HepG2 (cell line): ENCODE measurements at regions of chr1 and their contacts with region 1.

Region 1: GRCh38 chr1:67535474-67535873 is 105.3 kb upstream of the SERBP1 start:
- DNase-seq: peak; percentile 80
- ATAC-seq: peak; percentile 68
- H3K4me3 ChIP-seq: peak overlapping the region in 1 of 3 experiments; percentile 19; a peak in 1 of 6 replicates
- H3K27ac ChIP-seq: peak overlapping the region; percentile 82
- H3K4me1 ChIP-seq: peaks cover 61% of the 10 kb centered on the region
- H3K27me3 ChIP-seq: no peaks in the 10 kb centered on the region
- CTCF ChIP-seq: peak; percentile 93
- EP300 ChIP-seq: peak in 1 of 2 experiments; percentile 51; a peak in 2 of 4 replicates
- POLR2A ChIP-seq: no peak
- RAD21 ChIP-seq: peak; percentile 90

Region 2: DNA sequence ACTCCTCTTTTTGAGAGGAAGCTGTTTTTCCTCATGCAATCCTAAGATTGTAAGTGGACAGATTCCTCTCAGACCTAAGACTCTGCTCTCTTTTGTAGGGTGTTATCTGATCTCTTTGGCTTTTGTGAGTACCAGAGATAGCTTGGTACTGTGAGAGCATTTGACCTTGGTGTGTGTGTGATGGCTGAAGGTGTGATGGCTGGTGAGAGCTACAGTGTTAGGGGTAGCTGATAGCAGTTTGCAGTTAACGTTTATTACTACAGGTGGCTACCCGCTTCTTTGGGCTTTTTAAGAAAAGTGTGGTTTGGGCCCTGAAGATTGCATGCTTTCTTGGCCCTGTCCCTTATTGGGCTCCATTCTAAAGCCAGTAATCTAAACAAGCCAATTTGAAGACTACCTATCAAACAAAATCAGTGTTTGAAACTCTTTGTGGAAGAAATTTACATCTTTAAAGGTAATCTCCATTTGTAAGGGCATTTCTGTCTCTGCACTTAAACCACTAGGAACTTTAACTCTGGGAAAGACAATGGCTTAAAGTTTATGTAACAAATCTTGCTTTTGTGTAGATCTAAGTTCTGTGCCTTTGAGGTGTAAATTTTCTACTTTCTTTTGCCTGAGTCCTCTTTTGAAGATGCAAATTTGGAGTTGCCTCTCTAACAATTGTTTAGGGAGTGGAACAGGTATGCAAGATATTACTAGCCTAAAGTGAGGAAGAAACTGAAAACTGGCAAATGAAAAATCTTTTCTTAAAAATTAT is 20.0 kb before region 1 on chr1:
- CTCF ChIA-PET with region 1: interaction called, 3 read pairs
- POLR2A ChIA-PET with region 1: interaction called, 12 read pairs
- in situ Hi-C with region 1: no loop called
- intact Hi-C with region 1: loop called (anchors 1 kb)
- DNase-seq: no peak
- ATAC-seq: no peak
- H3K4me3 ChIP-seq: no peak overlapping the region
- H3K27ac ChIP-seq: peak overlapping the region; percentile 75
- H3K4me1 ChIP-seq: peaks cover 40% of the 10 kb centered on the region
- H3K27me3 ChIP-seq: no peaks in the 10 kb centered on the region
- CTCF ChIP-seq: no peak
- EP300 ChIP-seq: no peak
- POLR2A ChIP-seq: no peak
- RAD21 ChIP-seq: no peak

Region 3: GRCh38 chr1:67561704-67562113 is 26.2 kb after region 1 on chr1:
- CTCF ChIA-PET with region 1: interaction called, 8 read pairs
- POLR2A ChIA-PET with region 1: interaction called, 6 read pairs
- in situ Hi-C with region 1: no loop called
- intact Hi-C with region 1: loop called (anchors 1 kb)
- DNase-seq: peak; percentile 74
- ATAC-seq: peak; percentile 90
- H3K4me3 ChIP-seq: no peak overlapping the region
- H3K27ac ChIP-seq: no peak overlapping the region
- H3K4me1 ChIP-seq: peaks cover 52% of the 10 kb centered on the region
- H3K27me3 ChIP-seq: 0 out of 5 replicates have a peak, but pooled peaks cover 0 to 6% of the 10 kb centered on the region in 2 experiments
- CTCF ChIP-seq: peak; percentile 88
- EP300 ChIP-seq: no peak
- POLR2A ChIP-seq: no peak
- RAD21 ChIP-seq: peak; percentile 91

Region 4: DNA sequence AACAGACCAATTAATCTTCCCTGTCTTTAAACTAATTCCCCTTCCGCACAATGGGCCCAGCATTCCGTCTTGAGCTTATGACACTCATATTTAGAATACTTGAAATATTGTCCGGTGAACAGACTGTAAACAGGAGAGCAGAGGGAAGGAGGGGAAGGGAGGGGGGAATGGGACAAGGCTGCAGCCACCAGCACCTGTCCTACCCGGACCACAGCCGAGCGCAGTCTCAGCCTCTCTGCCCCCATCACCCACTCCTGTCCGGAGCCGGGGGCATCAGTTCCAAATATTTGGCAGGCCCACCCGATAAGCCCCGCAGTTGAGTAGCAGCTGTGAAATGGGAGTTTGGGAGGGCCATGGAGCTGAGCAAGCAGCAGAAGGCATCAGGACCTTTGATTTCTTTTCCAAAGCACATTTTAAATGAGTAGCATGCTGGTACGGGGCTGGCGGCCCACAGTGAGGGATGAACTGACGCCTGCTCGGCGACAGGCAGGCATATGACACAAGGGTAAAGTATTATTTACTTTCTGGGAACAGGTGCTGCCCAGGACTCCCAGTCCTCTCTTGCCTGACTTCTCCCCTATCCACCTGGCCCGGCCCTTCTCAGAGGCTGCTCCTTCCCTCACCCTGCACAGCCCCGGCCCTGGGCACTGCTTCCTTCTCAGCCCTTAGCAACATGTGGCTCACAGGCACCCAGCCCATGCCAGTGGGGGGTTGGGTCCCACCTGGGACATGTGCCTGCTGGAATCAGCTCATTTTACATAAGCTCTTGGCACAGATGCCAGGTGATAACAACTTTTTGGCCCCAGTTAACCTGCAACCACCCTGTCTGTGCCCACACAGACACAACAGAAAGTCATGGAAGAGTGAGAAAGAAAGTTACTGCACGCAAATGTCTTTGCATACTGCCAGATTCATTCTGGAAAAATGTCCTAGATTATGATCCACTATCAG is 37.1 kb after region 1 on chr1:
- CTCF ChIA-PET with region 1: no interaction called
- POLR2A ChIA-PET with region 1: no interaction called
- in situ Hi-C with region 1: no loop called
- intact Hi-C with region 1: no loop called
- DNase-seq: no peak
- ATAC-seq: peak; percentile 85
- H3K4me3 ChIP-seq: peak overlapping the region in 1 of 3 experiments; percentile 52; a peak in 2 of 6 replicates
- H3K27ac ChIP-seq: no peak overlapping the region
- H3K4me1 ChIP-seq: peaks cover 68% of the 10 kb centered on the region
- H3K27me3 ChIP-seq: no peaks in the 10 kb centered on the region; a peak in 2 of 5 replicates
- CTCF ChIP-seq: no peak
- EP300 ChIP-seq: no peak
- POLR2A ChIP-seq: no peak
- RAD21 ChIP-seq: no peak

Region 5: GRCh38 chr1:67582625-67583461 is 47.4 kb after region 1 on chr1:
- CTCF ChIA-PET with region 1: no interaction called
- POLR2A ChIA-PET with region 1: no interaction called
- in situ Hi-C with region 1: no loop called
- intact Hi-C with region 1: no loop called
- DNase-seq: no peak
- ATAC-seq: no peak
- H3K4me3 ChIP-seq: no peak overlapping the region
- H3K27ac ChIP-seq: no peak overlapping the region
- H3K4me1 ChIP-seq: peaks cover 29% of the 10 kb centered on the region
- H3K27me3 ChIP-seq: peaks cover 0 to 4% of the 10 kb centered on the region in 2 experiments; a peak in 1 of 5 replicates
- CTCF ChIP-seq: no peak
- EP300 ChIP-seq: no peak
- POLR2A ChIP-seq: no peak
- RAD21 ChIP-seq: no peak

Region 6: GRCh38 chr1:67760030-67760821 is 224.8 kb after region 1 on chr1:
- CTCF ChIA-PET with region 1: interaction called, 20 read pairs
- POLR2A ChIA-PET with region 1: interaction called, 25 read pairs
- in situ Hi-C with region 1: no loop called
- intact Hi-C with region 1: loop called (anchors 1 kb)
- DNase-seq: peak; percentile 87
- ATAC-seq: peak; percentile 99
- H3K4me3 ChIP-seq: peak overlapping the region in 1 of 3 experiments; percentile 7; a peak in 1 of 6 replicates
- H3K27ac ChIP-seq: peak overlapping the region; percentile 42
- H3K4me1 ChIP-seq: peaks cover 30% of the 10 kb centered on the region
- H3K27me3 ChIP-seq: peaks cover 2% of the 10 kb centered on the region in 2 experiments; a peak in 2 of 5 replicates
- CTCF ChIP-seq: peak; percentile 72
- EP300 ChIP-seq: peak; percentile 29 to 46; a peak in 1 of 4 replicates
- POLR2A ChIP-seq: no peak
- RAD21 ChIP-seq: peak; percentile 79; the same call in 1 of the 2 replicates